Right ventricle myocardium inferior (tissue), 1 donor: ENCODE measurements at regions of chr3 and their contacts with region 1.

Region 1: DNA sequence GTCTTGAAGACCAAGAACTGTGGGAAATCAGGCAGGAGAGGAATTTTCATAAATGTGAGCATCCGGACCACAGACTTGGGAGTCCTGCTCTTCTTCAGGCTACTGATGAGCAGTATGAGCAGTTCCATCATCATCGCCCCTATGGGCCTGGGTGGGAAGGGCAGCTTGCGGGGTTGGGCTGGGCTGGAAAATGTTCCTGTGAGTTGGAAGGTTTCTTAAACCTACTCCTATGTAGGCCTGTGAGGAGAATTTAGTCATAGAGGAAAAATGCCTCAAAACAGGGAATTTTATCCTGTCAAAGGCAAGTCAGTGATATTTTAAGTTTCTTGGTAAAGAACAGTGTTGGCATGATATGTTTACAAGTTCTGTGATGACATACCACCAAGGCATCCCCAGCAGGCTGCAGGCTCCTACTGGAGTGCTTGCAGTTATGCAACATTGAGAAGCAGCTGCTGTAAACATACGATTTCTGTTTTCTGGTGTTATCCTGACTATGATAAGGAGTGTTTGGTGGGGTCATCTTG is 10.3 kb downstream of the MASP1 start:
- DNase-seq: no peak
- ATAC-seq: peak; percentile 56

Region 2: GRCh38 chr3:187164885-187165543 is 116.2 kb before region 1 on chr3:
- intact Hi-C with region 1: no loop called
- DNase-seq: no peak
- ATAC-seq: peak; percentile 27

Region 3: DNA sequence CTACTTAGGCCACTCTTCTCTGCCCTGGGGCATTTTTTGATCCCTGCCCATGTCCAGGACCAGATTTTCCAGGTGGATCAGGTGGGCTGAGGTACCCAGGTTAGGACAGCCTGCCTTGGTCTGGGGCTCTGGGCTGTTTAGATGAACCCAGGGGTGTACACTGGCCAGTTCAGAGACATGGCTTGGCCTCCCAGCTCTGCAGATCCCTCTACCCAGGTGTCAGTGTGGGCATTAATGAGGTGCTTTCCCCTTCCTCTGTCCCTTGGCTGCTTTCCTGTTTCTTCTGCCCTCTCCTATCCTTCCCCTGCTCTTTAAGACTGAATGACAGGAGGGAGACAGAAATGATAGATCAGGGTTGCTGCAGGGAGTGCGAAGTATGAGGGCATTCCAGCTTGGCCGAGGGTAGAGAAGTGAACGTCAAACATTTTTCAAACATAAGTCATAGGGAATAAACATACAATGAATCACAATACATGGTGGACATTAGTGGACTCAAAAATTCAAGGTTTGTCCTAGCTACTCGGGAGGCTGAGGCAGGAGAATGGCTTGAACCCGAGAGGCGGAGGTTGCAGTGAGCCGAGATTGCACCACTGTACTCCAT is 53.5 kb before region 1 on chr3:
- intact Hi-C with region 1: no loop called
- DNase-seq: no peak
- ATAC-seq: no peak

Region 4: GRCh38 chr3:187243933-187244524 is 37.2 kb before region 1 on chr3:
- intact Hi-C with region 1: no loop called
- DNase-seq: no peak
- ATAC-seq: peak; percentile 90

Region 5: GRCh38 chr3:187265461-187265955 is 15.7 kb before region 1 on chr3:
- intact Hi-C with region 1: loop called (anchors 2 kb)
- DNase-seq: no peak
- ATAC-seq: peak; percentile 84